Activated naive CD4-positive, alpha-beta T cell treated with anti-CD3 and anti-CD28 coated beads for 36 hours (primary cell): ENCODE measurements at regions of chr2 and their contacts with region 1.

Region 1: DNA sequence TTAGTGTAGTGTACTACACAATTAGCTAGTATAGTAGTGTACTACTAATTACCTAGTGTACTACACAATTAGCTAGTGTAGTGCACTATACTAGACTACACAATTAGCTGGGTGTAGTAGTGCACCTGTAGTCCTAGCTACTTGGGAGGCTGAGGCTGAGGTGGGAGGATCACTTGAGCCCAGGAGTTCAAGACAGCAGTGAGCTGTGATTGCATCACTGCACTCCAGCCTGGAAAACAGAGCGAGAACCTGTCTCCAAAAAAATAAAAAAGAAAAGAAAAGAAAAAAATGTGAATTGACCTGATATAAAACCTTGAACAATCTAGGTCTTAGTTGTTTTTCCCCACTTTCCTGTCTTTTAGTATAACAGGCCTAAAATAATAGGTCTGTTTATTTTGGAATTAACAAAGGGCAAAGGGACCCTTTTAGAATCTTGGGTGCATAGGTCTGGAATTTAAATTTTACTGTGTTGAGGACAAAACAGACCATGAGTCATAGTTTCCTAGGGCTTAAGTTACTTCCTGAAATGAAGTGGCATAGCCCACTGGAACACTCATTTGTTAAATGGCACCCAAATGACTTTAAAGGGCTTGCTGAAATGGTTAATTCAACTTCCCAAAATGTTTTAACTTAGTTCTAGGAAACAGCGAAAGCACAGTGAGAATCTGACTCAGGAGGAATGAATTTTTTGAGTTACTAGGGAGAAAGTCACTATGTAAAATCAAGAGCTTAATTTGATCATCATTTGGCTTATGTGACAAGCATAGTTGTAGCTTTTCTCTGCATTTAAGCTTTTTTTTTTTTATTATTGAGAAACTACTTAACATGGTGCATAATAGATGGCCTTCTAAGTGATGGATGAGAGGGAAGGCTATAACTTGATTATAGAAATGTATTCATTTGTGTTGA is 50.7 kb upstream of the ARL5A start:
- DNase-seq: no peak
- H3K4me3 Mint-ChIP-seq: no peak overlapping the region
- H3K27ac Mint-ChIP-seq: no peak overlapping the region
- H3K4me1 Mint-ChIP-seq: peaks cover 11% of the 10 kb centered on the region
- H3K27me3 Mint-ChIP-seq: no peaks in the 10 kb centered on the region

Region 2: GRCh38 chr2:151771599-151772358 is 107.1 kb before region 1 on chr2:
- CTCF ChIA-PET with region 1: no interaction called
- intact Hi-C with region 1: no loop called
- DNase-seq: no peak
- H3K4me3 Mint-ChIP-seq: no peak overlapping the region
- H3K27ac Mint-ChIP-seq: no peak overlapping the region
- H3K4me1 Mint-ChIP-seq: peaks cover 4% of the 10 kb centered on the region
- H3K27me3 Mint-ChIP-seq: no peaks in the 10 kb centered on the region

Region 3: DNA sequence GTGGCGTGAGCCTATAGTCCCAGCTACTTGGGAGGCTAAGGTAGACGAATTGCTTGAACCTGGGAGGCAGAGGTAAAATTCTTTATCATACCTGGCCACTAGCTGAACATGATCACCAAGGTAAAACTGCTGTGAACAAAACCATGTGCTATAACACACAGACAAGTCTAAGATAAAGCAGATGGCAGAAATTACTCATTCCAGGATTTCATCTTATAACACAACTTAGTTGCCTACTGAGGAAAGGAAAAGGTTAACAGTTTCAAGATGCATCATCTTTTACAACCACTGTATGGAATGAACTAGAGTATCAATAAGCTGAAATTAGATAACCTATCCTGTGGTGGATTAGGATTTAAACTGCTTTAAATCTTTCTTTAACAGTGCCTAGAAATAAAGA is 59.0 kb before region 1 on chr2:
- CTCF ChIA-PET with region 1: interaction called, 3 read pairs
- intact Hi-C with region 1: loop called (anchors 2 kb)
- DNase-seq: no peak
- H3K4me3 Mint-ChIP-seq: no peak overlapping the region
- H3K27ac Mint-ChIP-seq: no peak overlapping the region
- H3K4me1 Mint-ChIP-seq: peaks cover 56% of the 10 kb centered on the region
- H3K27me3 Mint-ChIP-seq: no peaks in the 10 kb centered on the region